ENCODE measurements at regions of chr4 and their contacts with region 1.

Region 1: GRCh38 chr4:9704551-9705332 is 76.7 kb upstream of the DRD5 start:
- DNase-seq: no peak
- H3K4me3 Mint-ChIP-seq: no peak overlapping the region
- H3K27ac Mint-ChIP-seq: no peak overlapping the region
- H3K4me1 Mint-ChIP-seq: peaks cover 15% of the 10 kb centered on the region
- H3K27me3 Mint-ChIP-seq: no peaks in the 10 kb centered on the region

Region 2: GRCh38 chr4:9679704-9680478 is 24.9 kb before region 1 on chr4:
- CTCF ChIA-PET with region 1: no interaction called
- DNase-seq: no peak
- H3K4me3 Mint-ChIP-seq: no peak overlapping the region
- H3K27ac Mint-ChIP-seq: no peak overlapping the region
- H3K4me1 Mint-ChIP-seq: no peaks in the 10 kb centered on the region
- H3K27me3 Mint-ChIP-seq: peaks cover 6% of the 10 kb centered on the region

Region 3: GRCh38 chr4:9691238-9692065 is 13.3 kb before region 1 on chr4:
- CTCF ChIA-PET with region 1: interaction called, 10 read pairs
- DNase-seq: peak; percentile 92
- H3K4me3 Mint-ChIP-seq: peak overlapping the region; percentile 76
- H3K27ac Mint-ChIP-seq: peak overlapping the region; percentile 81
- H3K4me1 Mint-ChIP-seq: peaks cover 21% of the 10 kb centered on the region
- H3K27me3 Mint-ChIP-seq: peaks cover 16% of the 10 kb centered on the region

Region 4: DNA sequence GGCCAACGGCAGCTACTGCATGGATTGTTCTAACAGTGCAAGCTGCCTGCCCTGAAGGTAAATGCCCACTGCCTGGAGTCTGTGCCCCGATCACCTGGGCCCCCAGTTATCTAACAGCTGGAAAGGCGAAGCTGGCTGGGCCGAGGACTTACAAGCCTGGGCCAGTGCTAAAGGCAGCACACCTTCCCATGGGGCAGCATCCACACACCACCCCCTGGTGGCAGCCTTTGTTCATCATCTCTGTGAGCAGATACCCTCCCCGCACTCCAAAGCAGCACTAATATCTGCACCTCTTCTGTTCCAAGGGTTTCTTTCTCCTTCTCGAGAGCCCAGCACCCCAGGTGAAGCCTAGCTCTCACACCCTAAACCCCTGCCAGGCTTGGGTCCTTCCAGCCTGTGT is 309.0 kb after region 1 on chr4:
- CTCF ChIA-PET with region 1: interaction called, 57 read pairs
- DNase-seq: peak; percentile 71
- H3K4me3 Mint-ChIP-seq: no peak overlapping the region
- H3K27ac Mint-ChIP-seq: peak overlapping the region; percentile 28
- H3K4me1 Mint-ChIP-seq: peaks cover 15% of the 10 kb centered on the region
- H3K27me3 Mint-ChIP-seq: no peaks in the 10 kb centered on the region

Region 5: GRCh38 chr4:10018818-10019461 is 314.2 kb after region 1 on chr4:
- CTCF ChIA-PET with region 1: interaction called, 57 read pairs
- DNase-seq: peak; percentile 96
- H3K4me3 Mint-ChIP-seq: peak overlapping the region; percentile 81
- H3K27ac Mint-ChIP-seq: peak overlapping the region; percentile 96
- H3K4me1 Mint-ChIP-seq: peaks cover 23% of the 10 kb centered on the region
- H3K27me3 Mint-ChIP-seq: peaks cover 14% of the 10 kb centered on the region

Region 6: GRCh38 chr4:10033191-10033881 is 328.6 kb after region 1 on chr4:
- CTCF ChIA-PET with region 1: no interaction called
- DNase-seq: no peak
- H3K4me3 Mint-ChIP-seq: no peak overlapping the region
- H3K27ac Mint-ChIP-seq: peak overlapping the region; percentile 1
- H3K4me1 Mint-ChIP-seq: peaks cover 21% of the 10 kb centered on the region
- H3K27me3 Mint-ChIP-seq: peaks cover 28% of the 10 kb centered on the region

Measured in activated naive CD4-positive, alpha-beta T cell treated with anti-CD3 and anti-CD28 coated beads, Interleukin-2, amount 10 ng/mL, durations not matched to agents 7 days and 5 days (primary cell).